Naive thymus-derived CD4-positive, alpha-beta T cell (primary cell): ENCODE measurements at regions of chr19 and their contacts with region 1.

Region 1: GRCh38 chr19:1064661-1065605 is 2.0 kb upstream of the ARHGAP45 start:
- DNase-seq: peak; percentile 60 to 82 (median 72)
- ATAC-seq: peak; percentile 47
- H3K4me3 ChIP-seq: peak overlapping the region; percentile 27
- H3K4me3 Mint-ChIP-seq: peak overlapping the region; percentile 59 to 99 (median 68)
- H3K27ac ChIP-seq: peak overlapping the region; percentile 99
- H3K27ac Mint-ChIP-seq: peak overlapping the region; percentile 40 to 92 (median 71)
- H3K4me1 ChIP-seq: peaks cover 32 to 38% of the 10 kb centered on the region in 2 donors
- H3K4me1 Mint-ChIP-seq: peaks cover 20 to 42% (median 33%) of the 10 kb centered on the region in 7 donors
- H3K27me3 ChIP-seq: no peaks in the 10 kb centered on the region
- H3K27me3 Mint-ChIP-seq: no peaks in the 10 kb centered on the region

Region 2: DNA sequence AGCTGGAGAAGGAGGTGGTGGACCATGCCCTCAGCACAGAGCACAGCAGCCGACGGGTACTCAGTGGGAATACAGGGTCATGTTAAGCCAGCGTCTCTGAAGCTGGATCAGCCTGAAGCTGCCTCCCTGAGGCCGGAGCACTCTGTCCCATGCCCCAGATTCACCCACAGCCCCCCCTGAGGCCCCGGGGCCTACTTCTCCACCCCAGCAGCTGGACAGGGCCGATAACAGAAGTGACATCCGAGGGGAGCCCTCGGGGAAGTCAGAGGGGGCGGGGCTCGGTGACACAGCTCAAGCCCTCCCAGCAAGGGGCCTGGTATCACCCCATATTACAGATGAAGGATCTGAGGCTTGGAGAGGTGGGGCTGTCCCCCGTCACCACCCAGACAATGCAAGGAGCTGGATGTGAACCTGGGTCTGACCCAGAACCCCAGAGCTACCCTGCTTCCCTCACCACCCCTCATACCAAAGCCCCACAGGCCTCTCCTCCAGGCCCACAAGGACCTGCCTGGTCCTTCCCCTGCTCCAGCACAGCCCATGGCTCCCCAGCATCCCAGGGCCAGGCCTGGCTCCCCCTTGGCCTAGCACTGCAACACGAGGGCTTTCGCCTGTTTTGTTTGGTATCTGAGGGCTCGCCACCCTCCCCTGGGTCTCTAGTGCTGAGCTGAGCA is 157.6 kb before region 1 on chr19:
- CTCF ChIA-PET with region 1: no interaction called
- POLR2A ChIA-PET with region 1: interaction called, 11 read pairs
- intact Hi-C with region 1: no loop called
- DNase-seq: peak in 2 of 9 donors; percentile 11 to 50
- ATAC-seq: peak; percentile 13
- H3K4me3 ChIP-seq: no peak overlapping the region
- H3K4me3 Mint-ChIP-seq: peak overlapping the region; percentile 26 to 91 (median 79)
- H3K27ac ChIP-seq: peak overlapping the region; percentile 95
- H3K27ac Mint-ChIP-seq: peak overlapping the region; percentile 100
- H3K4me1 ChIP-seq: peaks cover 34 to 42% of the 10 kb centered on the region in 2 donors
- H3K4me1 Mint-ChIP-seq: peaks cover 27 to 81% (median 52%) of the 10 kb centered on the region in 7 donors
- H3K27me3 ChIP-seq: no peaks in the 10 kb centered on the region
- H3K27me3 Mint-ChIP-seq: no peaks in the 10 kb centered on the region

Region 3: DNA sequence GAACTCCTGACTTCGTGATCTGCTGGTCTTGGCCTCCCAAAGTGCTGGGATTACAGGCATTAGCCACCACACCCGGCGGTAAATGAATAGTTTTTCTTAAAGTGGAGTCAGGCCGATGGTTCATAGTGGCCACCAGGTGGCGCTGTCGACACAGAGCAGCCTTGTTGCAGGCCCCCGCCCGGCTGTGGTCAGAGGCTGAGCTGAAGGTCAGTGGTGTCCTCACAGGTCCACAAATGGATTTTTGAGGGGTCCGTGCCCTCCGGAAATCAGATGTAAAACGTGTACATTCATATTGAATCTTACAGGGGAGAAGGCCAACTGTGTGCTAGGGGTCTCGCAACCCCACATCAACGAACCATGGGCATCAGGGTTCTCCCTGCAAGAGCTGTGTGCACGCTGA is 94.2 kb before region 1 on chr19:
- CTCF ChIA-PET with region 1: no interaction called
- POLR2A ChIA-PET with region 1: no interaction called
- intact Hi-C with region 1: no loop called
- DNase-seq: no peak
- ATAC-seq: no peak
- H3K4me3 ChIP-seq: no peak overlapping the region
- H3K4me3 Mint-ChIP-seq: no peak overlapping the region
- H3K27ac ChIP-seq: no peak overlapping the region
- H3K27ac Mint-ChIP-seq: peak overlapping the region in 4 of 9 donors; percentile 29 to 90 (median 64)
- H3K4me1 ChIP-seq: no peaks in the 10 kb centered on the region
- H3K4me1 Mint-ChIP-seq: no peaks in the 10 kb centered on the region
- H3K27me3 ChIP-seq: no peaks in the 10 kb centered on the region
- H3K27me3 Mint-ChIP-seq: no peaks in the 10 kb centered on the region

Region 4: GRCh38 chr19:1082172-1082927 is 17.4 kb after region 1 on chr19:
- CTCF ChIA-PET with region 1: interaction called, 68 read pairs
- POLR2A ChIA-PET with region 1: interaction called, 2,022 read pairs
- intact Hi-C with region 1: loop called (anchors 1 kb)
- DNase-seq: peak; percentile 66 to 93 (median 85)
- ATAC-seq: peak; percentile 92
- H3K4me3 ChIP-seq: no peak overlapping the region
- H3K4me3 Mint-ChIP-seq: peak overlapping the region in 9 of 10 donors; percentile 34 to 97 (median 75)
- H3K27ac ChIP-seq: peak overlapping the region; percentile 66
- H3K27ac Mint-ChIP-seq: peak overlapping the region in 8 of 9 donors; percentile 54 to 100 (median 90)
- H3K4me1 ChIP-seq: peaks cover 40 to 44% of the 10 kb centered on the region in 2 donors
- H3K4me1 Mint-ChIP-seq: peaks cover 17 to 59% (median 46%) of the 10 kb centered on the region in 7 donors
- H3K27me3 ChIP-seq: no peaks in the 10 kb centered on the region
- H3K27me3 Mint-ChIP-seq: no peaks in the 10 kb centered on the region

Region 5: GRCh38 chr19:1103708-1104310 is 38.9 kb after region 1 on chr19 and contains the start of gene GPX4:
- CTCF ChIA-PET with region 1: interaction called, 3 read pairs
- POLR2A ChIA-PET with region 1: interaction called, 2,022 read pairs
- intact Hi-C with region 1: loop called (anchors 1 to 5 kb)
- DNase-seq: peak; percentile 90 to 98 (median 95)
- ATAC-seq: peak; percentile 91
- H3K4me3 ChIP-seq: peak within 1 kb of the TSS; percentile 79
- H3K4me3 Mint-ChIP-seq: peak within 1 kb of the TSS; percentile 66 to 82 (median 78)
- H3K27ac ChIP-seq: peak within 1 kb of the TSS; percentile 100
- H3K27ac Mint-ChIP-seq: peak within 1 kb of the TSS; percentile 79 to 96 (median 93)
- H3K4me1 ChIP-seq: peaks cover 13 to 18% of the 10 kb centered on the region in 2 donors
- H3K4me1 Mint-ChIP-seq: peaks cover 17 to 48% (median 36%) of the 10 kb centered on the region in 7 donors
- H3K27me3 ChIP-seq: no peaks in the 10 kb centered on the region
- H3K27me3 Mint-ChIP-seq: no peaks in the 10 kb centered on the region
- total RNA-seq, gene GPX4: 122 to 235 (median 194) TPM

Region 6: DNA sequence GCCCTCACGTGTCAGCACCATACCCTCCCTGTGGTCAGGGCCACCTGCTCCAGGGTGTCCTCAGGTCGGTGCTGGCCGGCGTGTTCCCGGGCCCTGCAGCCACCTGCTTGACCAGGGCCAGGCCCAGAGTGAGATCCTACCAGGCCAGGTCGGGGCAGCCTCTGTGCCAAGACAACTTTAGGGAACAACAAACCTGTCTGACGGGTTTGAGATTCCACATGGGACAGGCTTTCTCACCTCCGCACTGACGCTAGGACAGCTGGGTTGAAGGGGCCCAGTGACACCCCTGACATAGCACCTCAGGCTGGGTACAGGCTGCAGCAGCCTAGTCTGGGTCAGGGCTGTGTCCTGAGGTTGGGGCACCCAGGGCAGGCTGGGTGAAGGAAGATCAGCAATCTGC is 116.7 kb after region 1 on chr19:
- CTCF ChIA-PET with region 1: no interaction called
- POLR2A ChIA-PET with region 1: no interaction called
- intact Hi-C with region 1: no loop called
- DNase-seq: no peak
- ATAC-seq: no peak
- H3K4me3 ChIP-seq: no peak overlapping the region
- H3K4me3 Mint-ChIP-seq: peak overlapping the region in 4 of 10 donors; percentile 22 to 77 (median 47)
- H3K27ac ChIP-seq: no peak overlapping the region
- H3K27ac Mint-ChIP-seq: peak overlapping the region in 3 of 9 donors; percentile 57 to 94 (median 81)
- H3K4me1 ChIP-seq: peaks cover 0 to 9% of the 10 kb centered on the region in 2 donors
- H3K4me1 Mint-ChIP-seq: peaks cover 11 to 34% (median 15%) of the 10 kb centered on the region in 7 donors
- H3K27me3 ChIP-seq: no peaks in the 10 kb centered on the region
- H3K27me3 Mint-ChIP-seq: peaks cover 0 to 7% (median 2%) of the 10 kb centered on the region in 5 donors

Region 7: DNA sequence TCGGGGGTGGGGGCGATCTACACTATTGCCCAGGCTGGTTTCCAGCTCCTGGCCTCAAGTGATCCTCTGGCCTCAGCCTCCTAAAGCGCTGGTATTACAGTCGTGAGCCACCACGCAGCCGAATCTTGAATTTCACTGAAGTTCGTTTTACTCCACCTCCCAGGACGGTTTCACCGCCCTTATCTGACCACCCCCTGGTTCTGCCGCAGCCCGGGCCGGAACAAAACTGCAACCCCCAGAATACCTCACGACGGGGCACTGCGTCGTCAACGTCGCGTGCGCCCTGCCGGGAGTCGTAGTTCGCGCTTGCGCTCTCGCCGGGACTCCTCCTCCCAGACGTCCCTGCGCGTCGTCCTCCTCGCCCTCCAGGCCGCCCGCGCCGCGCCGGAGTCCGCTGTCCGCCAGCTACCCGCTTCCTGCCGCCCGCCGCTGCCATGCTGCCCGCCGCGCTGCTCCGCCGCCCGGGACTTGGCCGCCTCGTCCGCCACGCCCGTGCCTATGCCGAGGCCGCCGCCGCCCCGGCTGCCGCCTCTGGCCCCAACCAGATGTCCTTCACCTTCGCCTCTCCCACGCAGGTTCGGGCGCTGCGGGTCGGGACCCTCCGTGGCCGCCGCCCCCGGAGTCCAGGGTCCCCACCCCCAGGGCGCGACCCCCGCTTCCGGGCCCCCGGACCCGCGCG is 176.6 kb after region 1 on chr19 and contains the start of gene ATP5F1D:
- CTCF ChIA-PET with region 1: no interaction called
- POLR2A ChIA-PET with region 1: interaction called, 3 read pairs
- intact Hi-C with region 1: loop called in 1 of 2 experiments (anchors 2 kb)
- DNase-seq: peak; percentile 76 to 91 (median 85)
- ATAC-seq: peak; percentile 74
- H3K4me3 ChIP-seq: peak within 1 kb of the TSS; percentile 57
- H3K4me3 Mint-ChIP-seq: peak within 1 kb of the TSS; percentile 86 to 96 (median 90)
- H3K27ac ChIP-seq: peak within 1 kb of the TSS; percentile 82
- H3K27ac Mint-ChIP-seq: peak within 1 kb of the TSS; percentile 81 to 96 (median 93)
- H3K4me1 ChIP-seq: peaks cover 29 to 33% of the 10 kb centered on the region in 2 donors
- H3K4me1 Mint-ChIP-seq: peaks cover 16 to 47% (median 25%) of the 10 kb centered on the region in 7 donors
- H3K27me3 ChIP-seq: no peaks in the 10 kb centered on the region
- H3K27me3 Mint-ChIP-seq: peaks cover 4 to 18% (median 9%) of the 10 kb centered on the region in 5 donors
- total RNA-seq, gene ATP5F1D: 90.6 to 178 (median 102) TPM

Region 8: DNA sequence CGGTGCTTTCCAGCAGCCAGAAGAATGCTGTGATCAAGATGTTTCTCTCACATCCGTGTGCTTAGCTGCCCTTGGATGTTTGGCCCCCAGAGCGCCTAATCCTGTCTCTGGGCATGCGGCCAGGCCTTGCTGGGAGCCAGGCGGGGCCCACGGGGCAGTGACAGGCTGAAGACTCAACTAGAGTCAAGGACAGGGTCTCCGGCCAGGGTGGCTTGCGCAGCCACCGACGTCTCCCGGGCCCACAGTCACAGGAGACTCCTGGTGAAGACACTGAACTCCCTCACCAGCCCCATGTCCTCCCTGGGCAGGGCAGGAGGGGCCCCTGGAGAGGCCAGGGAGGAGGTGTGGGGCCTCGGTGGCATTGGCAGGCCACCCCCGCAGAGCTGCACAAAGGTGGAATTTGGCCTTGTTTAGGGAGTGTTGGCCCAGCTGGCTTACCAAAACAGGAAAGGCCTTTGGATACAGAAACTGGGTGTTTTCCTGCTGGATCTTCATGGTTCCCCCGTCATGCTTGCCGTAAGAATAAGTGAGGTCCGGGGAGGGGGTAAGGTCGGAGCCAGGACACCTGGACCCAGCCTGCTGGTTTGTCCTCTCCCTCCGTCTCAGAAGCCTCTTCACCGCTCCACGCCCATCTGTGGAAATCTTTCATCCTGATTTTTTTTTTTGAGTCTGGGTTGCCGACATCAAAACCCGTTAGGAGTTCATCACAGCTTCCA is 308.8 kb after region 1 on chr19:
- CTCF ChIA-PET with region 1: no interaction called
- POLR2A ChIA-PET with region 1: no interaction called
- intact Hi-C with region 1: no loop called
- DNase-seq: no peak
- ATAC-seq: no peak
- H3K4me3 ChIP-seq: no peak overlapping the region
- H3K4me3 Mint-ChIP-seq: no peak overlapping the region
- H3K27ac ChIP-seq: no peak overlapping the region
- H3K27ac Mint-ChIP-seq: no peak overlapping the region
- H3K4me1 ChIP-seq: no peaks in the 10 kb centered on the region
- H3K4me1 Mint-ChIP-seq: peaks cover 0 to 4% (median 0%) of the 10 kb centered on the region in 7 donors
- H3K27me3 ChIP-seq: no peaks in the 10 kb centered on the region
- H3K27me3 Mint-ChIP-seq: no peaks in the 10 kb centered on the region